ENCODE measurements at regions of chr7 and their contacts with region 1.

Region 1: DNA sequence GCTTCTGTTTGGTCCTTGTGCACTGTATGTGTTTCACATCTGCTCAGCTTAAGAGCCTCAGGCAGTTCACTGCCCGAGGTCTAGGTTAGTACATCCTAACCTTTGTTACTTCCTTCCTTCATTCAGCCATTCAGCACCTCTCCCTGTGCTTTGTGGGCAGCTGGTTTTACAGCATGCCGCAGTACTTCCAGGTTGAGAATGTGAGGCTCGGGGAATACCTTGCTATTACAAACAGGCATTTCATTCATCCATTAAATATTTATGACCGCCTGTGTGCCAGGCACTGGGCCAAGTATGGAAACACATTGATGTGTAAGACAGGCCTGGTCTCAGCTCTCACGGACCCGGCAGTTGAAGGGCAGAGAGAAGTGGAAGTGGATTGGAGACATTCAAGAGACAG is 82.4 kb downstream of the SHH start:
- DNase-seq: no peak
- H3K4me3 Mint-ChIP-seq: no peak overlapping the region
- H3K27ac Mint-ChIP-seq: no peak overlapping the region
- H3K4me1 Mint-ChIP-seq: peaks cover 31% of the 10 kb centered on the region
- H3K27me3 Mint-ChIP-seq: no peaks in the 10 kb centered on the region

Region 2: DNA sequence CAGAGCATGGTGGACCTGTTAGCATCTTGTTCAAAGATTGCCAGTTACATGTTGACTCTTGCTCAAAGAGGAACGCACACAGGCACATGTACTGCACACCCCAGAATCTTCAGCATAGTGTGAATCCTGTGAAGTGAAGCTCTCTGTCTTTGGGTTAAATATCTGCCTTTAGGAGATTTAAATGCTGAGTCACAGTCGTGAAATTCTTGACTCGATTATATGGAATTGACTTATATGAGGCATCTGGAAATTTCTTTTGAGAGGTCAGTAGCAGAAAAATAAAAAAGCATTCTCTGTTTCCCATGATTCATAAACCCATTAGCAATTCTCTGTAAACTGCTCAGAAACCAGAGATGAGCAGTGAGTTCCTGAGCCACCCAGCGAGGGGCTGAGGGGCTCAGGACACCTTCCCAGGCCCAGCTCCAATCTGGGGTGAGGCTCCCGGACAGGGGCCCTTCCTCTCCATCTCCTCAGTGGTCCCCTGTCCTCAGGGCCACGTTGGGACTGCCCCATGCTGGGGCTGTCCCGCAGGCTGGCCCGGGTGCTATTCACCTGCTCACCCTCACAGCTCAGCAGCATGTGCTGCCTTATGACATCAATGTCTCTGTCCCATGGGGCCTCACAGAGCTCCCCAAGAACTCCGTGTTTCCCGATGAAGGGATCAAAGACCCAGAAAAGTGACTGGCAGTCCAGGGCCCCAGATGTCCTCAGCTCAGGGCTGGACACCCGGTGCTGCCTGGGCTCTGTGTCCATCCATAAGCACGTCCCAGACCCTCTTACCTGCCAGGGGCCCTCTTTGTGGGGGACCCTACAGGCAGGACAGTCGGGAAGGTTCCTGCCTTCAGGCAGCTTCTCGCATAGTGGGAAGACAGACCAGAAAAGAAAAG is 482.1 kb before region 1 on chr7:
- CTCF ChIA-PET with region 1: no interaction called
- POLR2A ChIA-PET with region 1: no interaction called
- intact Hi-C with region 1: no loop called
- DNase-seq: no peak
- H3K4me3 Mint-ChIP-seq: no peak overlapping the region
- H3K27ac Mint-ChIP-seq: no peak overlapping the region
- H3K4me1 Mint-ChIP-seq: no peaks in the 10 kb centered on the region
- H3K27me3 Mint-ChIP-seq: peaks cover 9% of the 10 kb centered on the region

Region 3: GRCh38 chr7:155763691-155764437 is 34.0 kb after region 1 on chr7:
- CTCF ChIA-PET with region 1: interaction called, 15 read pairs
- POLR2A ChIA-PET with region 1: interaction called, 4 read pairs
- intact Hi-C with region 1: loop called (anchors 1 kb)
- DNase-seq: peak; percentile 80
- H3K4me3 Mint-ChIP-seq: peak overlapping the region; percentile 76
- H3K27ac Mint-ChIP-seq: peak overlapping the region; percentile 99
- H3K4me1 Mint-ChIP-seq: peaks cover 52% of the 10 kb centered on the region
- H3K27me3 Mint-ChIP-seq: no peaks in the 10 kb centered on the region

Region 4: DNA sequence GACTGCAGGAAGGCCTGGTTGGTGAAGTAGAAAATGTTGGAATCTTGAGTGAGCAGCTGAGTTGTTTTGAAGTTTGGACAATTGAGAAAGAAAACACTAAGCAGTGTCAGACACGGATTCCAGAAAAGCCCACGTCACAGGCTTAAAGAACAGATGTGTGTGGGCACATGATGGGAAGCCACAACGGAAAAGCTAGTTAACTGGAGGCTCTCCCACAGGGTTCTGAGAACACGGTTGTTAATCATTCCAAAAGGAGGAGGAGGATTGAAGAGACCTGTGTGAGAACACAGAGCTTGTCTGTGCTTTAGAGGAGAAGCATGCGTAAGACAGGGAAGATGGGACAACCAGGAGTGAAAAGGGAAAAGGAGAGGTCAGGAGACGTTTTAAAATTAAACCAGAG is 39.9 kb after region 1 on chr7:
- CTCF ChIA-PET with region 1: interaction called, 15 read pairs
- POLR2A ChIA-PET with region 1: interaction called, 4 read pairs
- intact Hi-C with region 1: loop called (anchors 1 kb)
- DNase-seq: no peak
- H3K4me3 Mint-ChIP-seq: no peak overlapping the region
- H3K27ac Mint-ChIP-seq: peak overlapping the region; percentile 18
- H3K4me1 Mint-ChIP-seq: peaks cover 7% of the 10 kb centered on the region
- H3K27me3 Mint-ChIP-seq: no peaks in the 10 kb centered on the region

Region 5: GRCh38 chr7:155935726-155936125 is 205.9 kb after region 1 on chr7:
- CTCF ChIA-PET with region 1: no interaction called
- POLR2A ChIA-PET with region 1: no interaction called
- intact Hi-C with region 1: no loop called
- DNase-seq: no peak
- H3K4me3 Mint-ChIP-seq: no peak overlapping the region
- H3K27ac Mint-ChIP-seq: no peak overlapping the region
- H3K4me1 Mint-ChIP-seq: no peaks in the 10 kb centered on the region
- H3K27me3 Mint-ChIP-seq: peaks cover 4% of the 10 kb centered on the region

Measured in activated CD4-positive, alpha-beta memory T cell treated with anti-CD3 and anti-CD28 coated beads for 36 hours (primary cell).